ENCODE measurements at regions of chr5 and their contacts with region 1.

Region 1: DNA sequence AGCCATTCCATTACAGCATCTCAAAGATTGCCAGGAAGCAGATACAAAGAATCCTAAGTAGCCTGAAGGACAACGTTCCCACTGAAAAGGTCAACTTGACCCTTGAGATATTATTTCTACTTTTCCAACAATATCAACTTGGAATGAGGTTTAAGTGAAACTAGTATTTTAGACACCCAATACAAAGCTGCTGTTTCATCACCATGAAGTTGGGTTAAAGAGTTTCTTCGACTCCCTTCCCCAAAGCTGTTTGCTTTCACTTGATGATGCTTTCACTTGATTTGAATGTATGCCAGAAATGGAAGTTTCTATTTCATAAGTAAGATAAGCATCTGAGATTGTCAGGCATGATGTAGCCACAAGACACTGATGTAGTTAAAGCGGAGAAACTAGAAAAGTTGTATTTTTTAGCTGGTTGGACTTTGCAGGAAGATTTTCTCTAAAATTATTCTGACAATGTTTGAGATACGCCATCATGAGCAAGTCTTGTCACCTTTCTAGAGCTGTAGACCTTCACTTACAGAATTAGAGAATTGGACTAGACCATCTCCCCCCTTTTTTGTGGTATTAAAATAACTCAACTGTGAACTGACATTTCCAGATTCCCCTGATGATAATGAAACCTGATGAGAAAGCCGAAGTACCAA is 20.1 kb downstream of the MOCS2 start:
- DNase-seq: no peak
- H3K4me3 ChIP-seq: no peak overlapping the region
- H3K27ac ChIP-seq: no peak overlapping the region
- H3K4me1 ChIP-seq: no peaks in the 10 kb centered on the region
- H3K27me3 ChIP-seq: no peaks in the 10 kb centered on the region
- CTCF ChIP-seq: no peak

Region 2: DNA sequence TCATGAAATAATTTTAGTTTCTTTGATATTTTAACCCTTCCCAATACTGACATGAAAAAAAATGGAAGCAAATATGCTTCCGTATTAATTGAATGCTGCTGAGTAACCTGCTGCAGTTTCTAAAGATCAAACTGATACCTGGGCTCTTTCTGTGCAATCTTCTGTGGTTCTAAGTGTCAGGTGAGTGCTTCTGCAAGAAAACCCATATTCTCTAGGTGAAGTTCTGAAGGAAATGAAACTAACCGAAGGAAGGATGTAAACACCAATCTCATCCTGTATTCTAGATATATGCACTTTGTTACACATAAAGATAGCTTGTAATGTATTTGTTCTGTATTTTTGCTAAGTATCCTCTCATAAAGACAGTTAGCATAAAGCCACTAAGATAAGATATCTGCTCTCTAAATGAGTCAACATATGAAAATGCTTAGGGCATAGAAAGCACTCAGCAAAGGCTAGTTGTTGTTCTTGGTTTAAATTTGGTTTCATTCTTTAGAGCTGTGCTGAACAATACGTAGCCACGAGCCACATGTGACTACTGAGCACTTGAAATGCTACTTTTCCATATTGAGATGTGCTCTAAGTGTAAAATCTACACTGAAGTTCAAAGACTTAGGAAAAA is 48.3 kb before region 1 on chr5:
- CTCF ChIA-PET with region 1: no interaction called
- dilution Hi-C with region 1: no loop called
- in situ Hi-C with region 1: no loop called
- intact Hi-C with region 1: loop called (anchors 5 kb)
- DNase-seq: no peak
- H3K4me3 ChIP-seq: no peak overlapping the region
- H3K27ac ChIP-seq: no peak overlapping the region
- H3K4me1 ChIP-seq: peaks cover 37% of the 10 kb centered on the region
- H3K27me3 ChIP-seq: no peaks in the 10 kb centered on the region
- CTCF ChIP-seq: no peak

Measured in mammary epithelial cell (primary cell).